B cell (primary cell): ENCODE measurements at regions of chr3 and their contacts with region 1.

Region 1: DNA sequence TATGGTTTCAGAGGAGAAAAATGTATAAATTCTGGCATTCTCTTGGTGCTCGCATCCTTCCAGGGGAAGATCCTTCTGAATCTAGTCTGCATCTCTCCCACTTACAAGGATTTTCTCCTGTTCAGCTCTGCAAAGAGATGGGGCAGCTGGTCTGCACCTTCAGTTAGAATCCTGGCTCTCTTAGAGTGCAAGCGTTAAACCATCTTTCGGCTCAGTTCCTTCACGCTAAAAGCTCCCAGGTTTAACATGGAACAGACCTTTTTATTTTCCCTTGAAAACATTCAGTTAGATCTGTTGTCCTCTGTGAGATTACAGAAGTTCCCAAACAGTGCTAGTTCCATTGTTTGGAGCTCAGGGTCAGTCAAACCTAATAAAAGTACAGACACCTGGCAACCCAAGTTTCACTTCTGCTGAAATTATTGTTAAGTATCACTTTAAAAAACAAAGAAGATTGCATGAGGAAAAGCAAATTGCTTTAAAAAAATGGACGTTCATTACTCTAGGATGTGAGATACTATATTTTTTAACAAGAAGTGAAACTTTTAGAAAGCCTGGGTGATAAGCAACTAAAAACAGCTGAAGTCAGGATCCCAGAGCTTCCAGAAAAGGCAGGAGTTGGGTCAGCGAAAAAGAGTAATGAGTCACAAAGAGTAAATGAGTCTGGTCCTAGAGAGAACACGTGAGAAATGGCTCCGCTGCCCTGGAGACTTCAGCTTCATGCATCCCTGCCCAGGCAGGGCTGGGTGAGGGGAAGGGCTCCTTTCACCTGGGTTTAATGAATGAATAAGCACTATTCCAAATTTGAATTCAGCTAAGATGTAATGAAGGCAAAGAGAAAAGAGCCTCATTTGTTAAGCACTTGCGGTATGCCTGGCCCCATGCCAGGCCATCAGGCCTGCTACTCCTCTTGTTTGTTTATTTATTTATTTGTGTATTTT is 63.3 kb downstream of the ABTB1 start:
- DNase-seq: peak; percentile 66
- ATAC-seq: peak; percentile 75
- H3K4me3 ChIP-seq: peak overlapping the region; percentile 5 to 43 (median 30)
- H3K4me3 Mint-ChIP-seq: peak overlapping the region; percentile 82
- H3K27ac ChIP-seq: peak overlapping the region; percentile 49 to 71
- H3K27ac Mint-ChIP-seq: peak overlapping the region; percentile 87
- H3K4me1 ChIP-seq: peaks cover 33 to 48% of the 10 kb centered on the region in 2 donors
- H3K4me1 Mint-ChIP-seq: peaks cover 36% of the 10 kb centered on the region
- H3K27me3 ChIP-seq: no peaks in the 10 kb centered on the region
- H3K27me3 Mint-ChIP-seq: no peaks in the 10 kb centered on the region
- CTCF ChIP-seq: no peak

Region 2: DNA sequence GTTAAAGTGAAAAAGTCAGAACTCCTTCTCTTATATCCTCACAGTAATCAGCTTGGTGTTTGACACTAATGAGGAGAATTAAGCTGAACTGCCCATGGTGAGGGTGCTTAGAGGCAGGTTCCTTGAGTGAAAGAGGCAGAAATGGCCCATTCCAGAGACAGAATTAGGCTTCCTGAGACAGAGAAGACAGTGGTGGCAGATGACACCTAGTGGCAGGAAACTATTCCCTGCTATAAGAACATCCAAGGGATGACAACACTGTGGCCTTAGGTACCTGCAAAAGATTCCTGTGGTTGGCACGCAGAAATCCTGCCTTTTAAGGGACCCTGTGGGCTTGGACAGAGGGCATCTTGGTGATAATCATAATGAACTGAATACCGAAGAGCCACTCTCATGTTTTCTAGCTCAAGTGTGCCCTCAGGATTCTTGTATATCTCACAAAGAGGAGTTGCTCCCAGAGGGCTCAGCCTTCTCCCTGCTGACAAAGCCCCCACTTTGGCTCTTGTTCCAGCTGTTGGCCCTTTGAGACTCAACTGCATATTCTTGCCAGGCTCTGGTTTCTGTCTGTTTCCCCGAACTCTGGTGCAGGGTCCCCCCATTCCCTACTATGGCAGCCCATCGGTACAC is 235.0 kb after region 1 on chr3:
- CTCF ChIA-PET with region 1: no interaction called
- POLR2A ChIA-PET with region 1: no interaction called
- intact Hi-C with region 1: loop called (anchors 10 kb)
- DNase-seq: peak; percentile 61
- ATAC-seq: peak; percentile 43
- H3K4me3 ChIP-seq: no peak overlapping the region
- H3K4me3 Mint-ChIP-seq: no peak overlapping the region
- H3K27ac ChIP-seq: no peak overlapping the region
- H3K27ac Mint-ChIP-seq: no peak overlapping the region
- H3K4me1 ChIP-seq: no peaks in the 10 kb centered on the region
- H3K4me1 Mint-ChIP-seq: no peaks in the 10 kb centered on the region
- H3K27me3 ChIP-seq: peaks cover 0 to 2% (median under 1%) of the 10 kb centered on the region in 4 experiments
- H3K27me3 Mint-ChIP-seq: peaks cover 10% of the 10 kb centered on the region
- CTCF ChIP-seq: peak; percentile 65

Region 3: DNA sequence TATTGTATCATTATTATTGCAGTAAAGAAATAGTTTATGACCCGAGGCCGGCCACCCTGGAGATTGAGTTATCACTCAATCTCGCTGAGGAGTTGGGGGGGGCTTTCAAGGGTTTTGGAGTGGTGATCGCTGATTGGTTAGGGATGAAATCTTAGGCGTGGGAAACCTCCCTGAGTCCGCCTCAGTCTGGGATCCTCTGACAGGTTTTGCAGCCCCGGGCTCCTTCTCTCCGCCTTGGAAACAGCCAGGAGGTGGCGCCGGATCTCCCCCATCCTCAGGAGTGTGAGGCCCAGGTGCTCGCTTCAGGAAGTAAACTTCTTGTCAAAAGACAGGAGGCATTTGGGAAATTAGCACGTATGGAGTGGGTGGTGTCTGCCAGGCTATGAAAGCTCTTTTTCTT is 275.1 kb after region 1 on chr3:
- CTCF ChIA-PET with region 1: no interaction called
- POLR2A ChIA-PET with region 1: no interaction called
- intact Hi-C with region 1: no loop called
- DNase-seq: no peak
- ATAC-seq: no peak
- H3K4me3 ChIP-seq: no peak overlapping the region
- H3K4me3 Mint-ChIP-seq: no peak overlapping the region
- H3K27ac ChIP-seq: no peak overlapping the region
- H3K27ac Mint-ChIP-seq: no peak overlapping the region
- H3K4me1 ChIP-seq: no peaks in the 10 kb centered on the region
- H3K4me1 Mint-ChIP-seq: no peaks in the 10 kb centered on the region
- H3K27me3 ChIP-seq: no peaks in the 10 kb centered on the region
- H3K27me3 Mint-ChIP-seq: peaks cover 11% of the 10 kb centered on the region
- CTCF ChIP-seq: no peak